Breast epithelium (tissue), 4 donors: ENCODE measurements at regions of chrX and their contacts with region 1.

Region 1: DNA sequence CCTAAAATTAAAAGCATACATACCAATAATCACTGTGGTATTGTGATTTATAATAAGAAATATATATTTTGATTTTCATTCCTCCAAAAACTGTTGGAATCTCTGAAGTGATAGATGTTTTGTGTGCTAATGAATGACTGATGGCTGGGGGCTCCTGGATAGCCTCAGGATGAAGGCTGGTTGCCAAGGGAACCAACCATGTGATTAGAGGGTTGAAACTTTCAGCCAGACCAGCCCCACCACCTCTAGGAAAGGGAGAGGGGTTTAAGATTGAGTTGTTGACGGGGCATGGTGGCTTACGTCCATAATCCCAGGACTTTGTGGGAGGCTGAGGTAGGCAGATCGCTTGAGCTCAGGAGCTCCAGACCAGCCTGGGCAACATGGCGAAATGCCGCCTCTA is 34.0 kb downstream of the HS6ST2 start:
- DNase-seq: no peak
- H3K4me3 ChIP-seq: no peak overlapping the region
- H3K27ac ChIP-seq: no peak overlapping the region
- H3K4me1 ChIP-seq: no peaks in the 10 kb centered on the region
- H3K27me3 ChIP-seq: peaks cover 0 to 50% of the 10 kb centered on the region in 2 donors
- CTCF ChIP-seq: no peak
- POLR2A ChIP-seq: no peak

Region 2: DNA sequence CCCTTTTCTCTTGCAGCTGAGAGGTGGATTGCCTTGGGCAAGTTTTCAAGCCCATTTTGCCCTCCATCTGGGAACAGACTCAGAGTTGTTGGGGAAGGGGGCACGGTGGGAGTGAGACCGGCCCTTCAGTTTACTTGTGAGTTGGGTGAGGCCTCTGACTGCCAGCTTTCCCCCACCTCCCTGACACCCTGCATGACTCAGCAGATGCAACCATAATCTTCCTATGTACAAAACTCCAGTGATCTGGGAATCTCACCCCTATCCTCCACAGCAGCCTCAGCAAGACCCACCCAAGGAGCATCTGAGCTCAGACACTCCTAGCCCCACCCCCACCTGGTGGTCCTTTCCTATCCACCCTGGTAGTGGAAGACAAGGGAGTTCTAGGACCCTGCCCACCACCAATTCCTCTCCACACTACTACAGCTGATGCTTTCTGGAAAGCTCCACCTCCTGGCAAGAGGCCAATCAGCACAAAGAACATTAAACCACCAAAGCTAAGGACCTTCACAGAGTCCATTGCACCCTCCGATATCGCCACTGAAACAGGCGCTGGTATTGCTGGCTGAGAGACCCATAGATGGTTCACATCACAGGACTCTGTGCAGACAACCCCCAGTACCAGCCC is 1000.7 kb before region 1 on chrX:
- intact Hi-C with region 1: no loop called
- DNase-seq: no peak
- H3K4me3 ChIP-seq: no peak overlapping the region
- H3K27ac ChIP-seq: no peak overlapping the region
- H3K4me1 ChIP-seq: no peaks in the 10 kb centered on the region
- H3K27me3 ChIP-seq: peaks cover 0 to 51% of the 10 kb centered on the region in 2 donors
- CTCF ChIP-seq: no peak
- POLR2A ChIP-seq: no peak

Region 3: DNA sequence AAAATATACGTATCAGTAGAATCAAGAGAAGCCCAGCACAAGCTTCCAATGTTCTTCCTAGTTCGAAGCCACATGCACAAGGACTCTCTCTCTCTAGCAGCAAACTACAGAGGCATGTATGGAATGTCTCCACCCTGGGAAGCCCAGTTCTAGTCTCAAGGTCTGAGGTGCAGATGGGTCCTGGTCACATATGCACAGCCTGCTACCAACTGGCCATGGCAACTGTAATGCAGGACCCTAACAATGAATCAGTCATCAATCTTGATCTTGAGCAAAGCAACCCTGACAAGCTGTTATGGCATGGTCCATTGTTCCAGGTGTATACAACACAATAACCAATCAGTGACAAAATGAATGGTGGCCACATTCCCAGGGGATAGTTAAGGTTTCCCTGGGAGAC is 491.4 kb before region 1 on chrX:
- intact Hi-C with region 1: loop called (anchors 5 kb)
- DNase-seq: no peak
- H3K4me3 ChIP-seq: no peak overlapping the region
- H3K27ac ChIP-seq: no peak overlapping the region
- H3K4me1 ChIP-seq: no peaks in the 10 kb centered on the region
- H3K27me3 ChIP-seq: peaks cover 0 to 36% of the 10 kb centered on the region in 2 donors
- CTCF ChIP-seq: no peak
- POLR2A ChIP-seq: no peak